Psoas muscle (tissue), 8 donors: ENCODE measurements at regions of chr2 and their contacts with region 1.

Region 1: DNA sequence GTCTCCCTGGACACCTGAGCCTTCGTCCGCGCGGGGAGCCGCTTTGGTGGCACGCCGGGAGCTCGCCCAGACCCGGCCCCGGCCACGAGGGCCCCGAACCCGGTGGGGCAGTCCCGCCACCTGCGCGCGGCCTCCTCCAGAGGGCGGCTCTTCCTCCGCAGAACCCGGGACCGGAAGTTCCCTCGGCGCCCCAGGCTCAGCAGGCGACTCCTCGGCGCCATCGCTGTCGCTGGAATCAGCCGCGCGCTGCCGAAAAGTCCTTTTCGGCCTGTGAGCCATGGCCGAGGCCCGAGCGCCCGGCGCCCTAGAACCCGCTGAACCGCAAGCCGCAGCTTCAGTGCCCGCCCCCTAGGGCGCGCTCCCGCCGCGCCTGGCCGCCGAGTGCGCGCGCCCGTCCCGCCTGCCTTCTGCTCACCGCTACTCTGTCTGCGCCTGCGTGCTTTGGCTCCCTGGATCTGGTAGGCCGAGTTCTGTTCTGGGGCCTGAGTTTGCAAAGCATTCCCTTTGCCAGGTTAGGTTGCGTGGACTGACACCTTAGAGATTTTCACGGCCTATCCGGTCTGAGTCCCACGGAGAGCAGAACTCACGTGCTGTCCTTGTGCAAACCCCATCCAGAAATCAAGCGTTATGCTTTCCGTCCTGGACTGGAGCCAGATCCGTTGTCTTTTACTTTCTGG is at the start of gene GCFC2:
- DNase-seq: peak; percentile 92 to 94
- ATAC-seq: peak; percentile 97 to 98 (median 98)
- H3K4me3 ChIP-seq: peak within 1 kb of the TSS; percentile 85
- H3K27ac ChIP-seq: peak within 1 kb of the TSS; percentile 97
- H3K4me1 ChIP-seq: peaks cover 19% of the 10 kb centered on the region
- H3K27me3 ChIP-seq: no peaks in the 10 kb centered on the region
- CTCF ChIP-seq: peak; percentile 33
- total RNA-seq, gene GCFC2: 13.2 to 31.5 (median 25.3) TPM

Region 2: DNA sequence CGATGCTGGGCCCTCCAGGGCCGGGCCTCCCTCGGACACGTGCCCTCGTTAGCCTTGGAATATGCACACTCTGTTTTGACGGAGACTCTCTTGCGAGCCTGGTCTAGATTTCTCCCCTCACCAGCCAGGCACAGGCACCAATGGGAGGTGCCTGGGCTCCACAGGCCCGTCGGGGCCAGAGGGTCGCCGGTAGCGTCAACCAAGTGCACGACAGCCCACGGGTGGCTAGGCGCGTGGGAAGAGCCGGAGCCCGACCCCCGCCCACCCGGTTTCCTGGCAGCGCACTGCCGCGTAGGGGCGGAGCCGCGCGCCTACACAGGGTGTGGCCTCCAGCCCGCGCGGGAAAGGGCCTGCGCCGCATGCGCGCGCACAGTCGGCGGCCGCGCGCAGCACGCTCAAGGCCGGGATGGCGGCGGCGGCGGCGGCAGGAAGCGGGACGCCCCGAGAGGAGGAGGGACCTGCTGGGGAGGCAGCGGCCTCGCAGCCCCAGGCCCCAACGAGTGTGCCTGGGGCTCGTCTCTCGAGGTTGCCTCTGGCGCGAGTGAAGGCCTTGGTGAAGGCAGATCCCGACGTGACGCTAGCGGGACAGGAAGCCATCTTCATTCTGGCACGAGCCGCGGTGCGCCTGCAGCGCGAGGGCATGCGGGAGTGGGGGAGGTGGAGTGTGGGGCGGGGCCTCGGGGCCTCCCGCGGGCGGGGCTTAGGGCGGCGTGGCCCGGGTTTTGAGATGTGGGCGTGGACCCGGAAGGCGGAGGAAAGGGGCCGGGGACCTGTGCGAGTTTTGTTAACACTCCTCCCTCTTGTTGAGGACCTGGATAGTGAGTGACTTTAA is 752.2 kb before region 1 on chr2 and contains the start of gene POLE4:
- intact Hi-C with region 1: loop called in 1 of 2 experiments (anchors 10 kb)
- DNase-seq: peak; percentile 94 to 97
- ATAC-seq: peak; percentile 99
- H3K4me3 ChIP-seq: peak within 1 kb of the TSS; percentile 70
- H3K27ac ChIP-seq: peak within 1 kb of the TSS; percentile 90
- H3K4me1 ChIP-seq: peaks cover 21% of the 10 kb centered on the region
- H3K27me3 ChIP-seq: no peaks in the 10 kb centered on the region
- CTCF ChIP-seq: no peak
- total RNA-seq, gene POLE4: 53.4 to 96.6 (median 72.8) TPM

Region 3: DNA sequence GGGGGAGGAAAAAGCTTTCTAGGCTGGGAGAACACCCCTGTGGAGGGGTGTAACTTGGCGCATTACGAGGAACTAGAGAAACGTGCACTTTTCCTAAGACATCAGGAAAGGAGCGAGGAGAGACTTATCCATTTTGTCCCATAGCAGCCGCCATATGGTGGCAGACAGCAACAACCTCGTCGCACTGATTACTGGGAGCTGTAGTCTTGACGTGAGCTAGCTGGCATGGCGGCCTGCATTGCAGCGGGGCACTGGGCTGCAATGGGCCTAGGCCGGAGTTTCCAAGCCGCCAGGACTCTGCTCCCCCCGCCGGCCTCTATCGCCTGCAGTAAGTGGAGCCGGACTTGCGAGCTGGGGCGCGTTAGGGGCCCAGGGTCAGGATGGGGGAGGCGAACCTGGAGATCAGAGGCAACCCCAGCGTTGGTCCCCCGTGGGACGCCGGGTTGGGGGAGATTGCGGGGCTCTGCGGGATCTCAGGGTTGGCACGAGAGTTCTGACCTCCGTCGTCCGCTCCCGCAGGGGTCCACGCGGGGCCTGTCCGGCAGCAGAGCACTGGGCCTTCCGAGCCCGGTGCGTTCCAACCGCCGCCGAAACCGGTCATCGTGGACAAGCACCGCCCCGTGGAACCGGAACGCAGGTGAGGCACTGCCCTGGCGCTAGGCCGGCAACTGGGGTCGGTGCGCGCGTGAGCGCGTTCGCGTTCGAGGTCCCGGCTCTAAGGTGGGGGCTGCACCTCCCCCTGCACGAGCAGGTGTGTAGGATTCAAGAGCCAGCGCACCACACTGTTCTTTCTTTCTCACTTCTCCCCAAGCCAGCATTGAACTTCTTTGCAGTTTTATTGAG is 63.9 kb before region 1 on chr2 and contains the start of gene MRPL19:
- intact Hi-C with region 1: loop called (anchors 5 to 10 kb)
- DNase-seq: peak; percentile 81 to 87
- ATAC-seq: peak; percentile 88 to 94 (median 90)
- H3K4me3 ChIP-seq: peak within 1 kb of the TSS; percentile 95
- H3K27ac ChIP-seq: peak within 1 kb of the TSS; percentile 83
- H3K4me1 ChIP-seq: peaks cover 38% of the 10 kb centered on the region
- H3K27me3 ChIP-seq: no peaks in the 10 kb centered on the region
- CTCF ChIP-seq: no peak
- total RNA-seq, gene MRPL19: 58.8 to 78.2 (median 71.9) TPM

Region 4: GRCh38 chr2:75654012-75654411 is 56.7 kb before region 1 on chr2:
- intact Hi-C with region 1: loop called (anchors 5 to 10 kb)
- DNase-seq: no peak
- ATAC-seq: no peak
- H3K4me3 ChIP-seq: no peak overlapping the region
- H3K27ac ChIP-seq: no peak overlapping the region
- H3K4me1 ChIP-seq: peaks cover 8% of the 10 kb centered on the region
- H3K27me3 ChIP-seq: no peaks in the 10 kb centered on the region
- CTCF ChIP-seq: no peak